Activated T-helper 2 cell treated with anti-CD3 and anti-CD28 coated beads, Interferon-gamma antibody, Interleukin-2, Interleukin-4, amounts not matched to agents 10 μg/mL and 5 μg/mL and 100 μg/mL, durations not matched to agents 14 hours and 24 hours and 36 hours (primary cell): ENCODE measurements at regions of chr6 and their contacts with region 1.

Region 1: DNA sequence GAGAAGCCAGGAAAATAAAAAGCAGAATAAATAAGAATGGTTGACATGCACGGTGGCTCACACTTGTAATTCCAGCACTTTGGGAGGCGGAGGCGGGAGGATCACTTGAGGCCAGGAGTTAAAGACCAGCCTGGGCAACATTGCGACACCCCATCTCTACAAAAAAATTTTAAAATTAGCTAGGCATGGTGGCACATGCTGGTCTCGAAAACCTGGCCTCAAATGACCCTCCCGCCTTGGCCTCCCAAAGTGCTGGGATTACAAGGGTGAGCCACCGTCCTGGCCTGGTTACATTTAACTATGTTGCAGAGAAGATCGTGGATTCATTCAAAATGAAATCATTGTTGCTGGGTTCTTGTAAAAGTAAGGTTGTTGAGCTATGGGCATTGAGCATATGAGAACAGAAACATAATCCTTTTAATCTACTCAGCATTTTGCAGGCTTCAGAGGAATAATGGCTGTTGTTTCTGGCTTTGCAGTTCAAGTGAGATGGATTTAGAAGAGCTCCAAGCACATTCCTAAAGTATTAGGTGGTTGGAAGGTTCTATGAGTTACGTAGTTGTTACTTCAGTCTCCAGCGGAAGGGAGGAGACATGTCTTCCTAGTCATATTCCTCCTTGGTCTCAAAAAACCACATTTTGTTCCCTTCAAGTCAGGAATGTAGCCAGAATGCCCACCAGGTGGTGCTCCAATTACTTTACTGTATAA is 45.6 kb upstream of the RAB23 start:
- DNase-seq: no peak
- H3K4me3 Mint-ChIP-seq: no peak overlapping the region
- H3K27ac Mint-ChIP-seq: no peak overlapping the region
- H3K4me1 Mint-ChIP-seq: peaks cover 8% of the 10 kb centered on the region
- H3K27me3 Mint-ChIP-seq: no peaks in the 10 kb centered on the region

Region 2: DNA sequence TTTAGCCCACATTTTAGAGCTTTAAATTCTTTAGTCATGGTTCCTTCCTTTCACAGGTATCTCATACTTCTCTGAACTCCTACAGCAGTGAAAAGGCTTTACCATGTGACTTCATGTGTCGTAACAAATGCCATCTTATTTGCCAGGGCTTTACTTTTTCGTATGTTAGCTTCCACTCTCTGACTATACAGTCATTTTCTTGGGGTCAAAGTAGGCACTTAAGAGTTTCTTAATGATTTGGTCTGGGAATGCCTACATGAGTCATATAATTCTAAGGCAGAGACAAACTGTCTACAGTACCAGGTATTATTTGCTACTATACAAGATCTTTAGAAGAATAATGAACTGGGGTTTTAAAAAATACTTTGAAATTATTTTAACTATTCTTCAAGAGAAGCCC is 60.6 kb before region 1 on chr6:
- intact Hi-C with region 1: loop called (anchors 10 kb)
- DNase-seq: no peak
- H3K4me3 Mint-ChIP-seq: no peak overlapping the region
- H3K27ac Mint-ChIP-seq: no peak overlapping the region
- H3K4me1 Mint-ChIP-seq: peaks cover 27% of the 10 kb centered on the region
- H3K27me3 Mint-ChIP-seq: no peaks in the 10 kb centered on the region